ENCODE measurements at regions of chr11 and their contacts with region 1.

Region 1: DNA sequence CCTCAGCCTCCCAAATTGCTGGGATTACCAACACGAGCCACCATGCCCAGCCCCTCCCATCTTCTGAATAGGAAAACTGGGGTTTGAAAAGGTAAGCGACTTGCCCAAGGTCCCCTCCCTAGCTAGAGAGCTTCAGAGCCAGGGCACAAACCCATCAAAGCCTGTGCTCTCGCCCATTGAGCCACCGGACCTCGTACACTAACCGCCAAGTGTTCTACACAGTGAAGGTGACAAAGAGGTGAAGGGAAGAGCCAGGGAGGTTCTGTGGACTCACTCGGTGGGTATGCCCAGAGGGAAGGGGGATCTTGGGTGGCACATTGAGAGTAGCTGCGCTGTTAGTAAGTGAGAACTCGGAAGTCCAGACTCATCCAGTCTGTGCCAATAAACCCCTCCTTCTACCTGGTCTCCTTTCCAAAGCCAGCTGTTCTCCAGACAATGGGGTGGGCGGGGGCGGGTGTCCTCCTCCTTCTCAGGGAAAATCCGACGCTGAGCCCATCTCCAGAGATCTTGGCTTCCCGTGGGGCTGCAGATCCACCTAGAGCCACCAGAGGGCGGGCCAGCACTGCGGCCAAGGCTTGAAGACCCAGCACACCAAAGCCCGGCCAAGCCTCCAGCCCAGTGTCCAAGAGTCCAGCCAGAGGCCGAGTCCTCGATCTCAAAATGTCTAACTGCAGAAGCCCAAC is 3.2 kb upstream of the RTN4RL2 start:
- DNase-seq: peak; percentile 88
- H3K4me3 ChIP-seq: no peak overlapping the region
- H3K27ac ChIP-seq: no peak overlapping the region
- H3K4me1 ChIP-seq: peaks cover 27 to 46% (median 38%) of the 10 kb centered on the region in 4 donors
- H3K27me3 ChIP-seq: peaks cover 48% of the 10 kb centered on the region
- CTCF ChIP-seq: peak; percentile 93 to 100 (median 99)
- EP300 ChIP-seq: no peak
- POLR2A ChIP-seq: no peak

Region 2: DNA sequence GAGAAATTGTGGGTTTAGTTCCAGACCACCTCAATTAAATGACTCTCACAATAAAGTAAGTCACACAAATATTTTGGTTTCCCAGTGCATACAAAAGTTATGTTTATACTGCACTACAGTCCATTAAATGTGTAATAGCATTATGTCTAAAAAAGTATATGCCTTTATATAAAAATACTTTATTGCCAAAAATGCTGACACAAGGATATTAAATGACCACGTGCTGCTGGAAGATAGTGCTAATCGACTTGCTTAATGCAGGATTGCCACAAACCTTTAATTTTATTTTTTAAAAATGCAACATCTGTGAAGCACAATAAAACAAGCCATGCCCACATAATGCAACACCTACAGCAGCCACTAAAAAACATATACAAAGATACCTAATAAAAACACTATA is 441.4 kb before region 1 on chr11:
- in situ Hi-C with region 1: no loop called
- intact Hi-C with region 1: no loop called
- DNase-seq: no peak
- H3K4me3 ChIP-seq: no peak overlapping the region
- H3K27ac ChIP-seq: no peak overlapping the region
- H3K4me1 ChIP-seq: no peaks in the 10 kb centered on the region
- H3K27me3 ChIP-seq: no peaks in the 10 kb centered on the region
- CTCF ChIP-seq: no peak
- EP300 ChIP-seq: no peak
- POLR2A ChIP-seq: no peak

Region 3: GRCh38 chr11:57167125-57167846 is 289.8 kb before region 1 on chr11:
- in situ Hi-C with region 1: no loop called
- intact Hi-C with region 1: no loop called
- DNase-seq: no peak
- H3K4me3 ChIP-seq: no peak overlapping the region
- H3K27ac ChIP-seq: no peak overlapping the region
- H3K4me1 ChIP-seq: no peaks in the 10 kb centered on the region
- H3K27me3 ChIP-seq: no peaks in the 10 kb centered on the region
- CTCF ChIP-seq: no peak
- EP300 ChIP-seq: no peak
- POLR2A ChIP-seq: no peak

Region 4: GRCh38 chr11:57269571-57270021 is 187.5 kb before region 1 on chr11:
- in situ Hi-C with region 1: no loop called
- intact Hi-C with region 1: no loop called
- DNase-seq: no peak
- H3K4me3 ChIP-seq: no peak overlapping the region
- H3K27ac ChIP-seq: no peak overlapping the region
- H3K4me1 ChIP-seq: peaks cover 0 to 8% (median 0%) of the 10 kb centered on the region in 4 donors
- H3K27me3 ChIP-seq: no peaks in the 10 kb centered on the region
- CTCF ChIP-seq: no peak
- EP300 ChIP-seq: no peak
- POLR2A ChIP-seq: no peak

Region 5: DNA sequence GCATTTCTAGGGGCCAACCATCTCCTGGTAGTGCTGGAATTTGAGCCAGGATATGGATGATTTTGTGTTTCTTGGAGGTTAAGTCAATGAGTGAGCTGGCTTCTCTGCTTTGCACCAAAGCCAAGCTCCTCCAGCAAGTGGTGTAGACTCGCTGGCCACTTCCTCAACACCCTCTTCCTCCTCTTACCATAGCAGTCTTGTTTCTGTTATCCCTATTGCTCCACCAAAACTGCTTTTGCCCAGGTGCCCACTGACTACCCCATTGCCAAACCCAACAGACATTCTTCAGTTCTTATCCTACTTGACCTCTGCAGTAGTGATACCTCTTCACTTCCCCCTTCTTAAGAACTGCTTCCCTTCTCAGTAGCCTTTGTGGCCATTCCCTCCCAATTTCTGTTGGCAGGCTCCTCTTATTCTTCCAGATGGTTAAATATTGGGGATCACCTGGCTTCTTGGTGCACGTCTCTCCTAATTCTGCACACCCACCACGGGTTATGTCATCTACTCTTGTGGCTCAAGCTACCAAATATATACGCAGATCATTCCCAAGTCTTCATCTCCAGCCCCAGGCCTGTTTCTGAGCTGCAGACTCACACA is 59.6 kb before region 1 on chr11:
- in situ Hi-C with region 1: no loop called
- intact Hi-C with region 1: no loop called
- DNase-seq: no peak
- H3K4me3 ChIP-seq: no peak overlapping the region
- H3K27ac ChIP-seq: no peak overlapping the region
- H3K4me1 ChIP-seq: peaks cover 0 to 7% (median 1%) of the 10 kb centered on the region in 4 donors
- H3K27me3 ChIP-seq: no peaks in the 10 kb centered on the region
- CTCF ChIP-seq: no peak
- EP300 ChIP-seq: no peak
- POLR2A ChIP-seq: no peak

Region 6: GRCh38 chr11:57527056-57527631 is 70.0 kb after region 1 on chr11:
- in situ Hi-C with region 1: loop called in 1 of 4 experiments (anchors 10 kb)
- intact Hi-C with region 1: loop called (anchors 2 kb)
- DNase-seq: peak; percentile 78
- H3K4me3 ChIP-seq: no peak overlapping the region
- H3K27ac ChIP-seq: no peak overlapping the region
- H3K4me1 ChIP-seq: peaks cover 9 to 20% (median 13%) of the 10 kb centered on the region in 4 donors
- H3K27me3 ChIP-seq: no peaks in the 10 kb centered on the region
- CTCF ChIP-seq: peak; percentile 89 to 92 (median 91)
- EP300 ChIP-seq: no peak
- POLR2A ChIP-seq: no peak

Region 7: DNA sequence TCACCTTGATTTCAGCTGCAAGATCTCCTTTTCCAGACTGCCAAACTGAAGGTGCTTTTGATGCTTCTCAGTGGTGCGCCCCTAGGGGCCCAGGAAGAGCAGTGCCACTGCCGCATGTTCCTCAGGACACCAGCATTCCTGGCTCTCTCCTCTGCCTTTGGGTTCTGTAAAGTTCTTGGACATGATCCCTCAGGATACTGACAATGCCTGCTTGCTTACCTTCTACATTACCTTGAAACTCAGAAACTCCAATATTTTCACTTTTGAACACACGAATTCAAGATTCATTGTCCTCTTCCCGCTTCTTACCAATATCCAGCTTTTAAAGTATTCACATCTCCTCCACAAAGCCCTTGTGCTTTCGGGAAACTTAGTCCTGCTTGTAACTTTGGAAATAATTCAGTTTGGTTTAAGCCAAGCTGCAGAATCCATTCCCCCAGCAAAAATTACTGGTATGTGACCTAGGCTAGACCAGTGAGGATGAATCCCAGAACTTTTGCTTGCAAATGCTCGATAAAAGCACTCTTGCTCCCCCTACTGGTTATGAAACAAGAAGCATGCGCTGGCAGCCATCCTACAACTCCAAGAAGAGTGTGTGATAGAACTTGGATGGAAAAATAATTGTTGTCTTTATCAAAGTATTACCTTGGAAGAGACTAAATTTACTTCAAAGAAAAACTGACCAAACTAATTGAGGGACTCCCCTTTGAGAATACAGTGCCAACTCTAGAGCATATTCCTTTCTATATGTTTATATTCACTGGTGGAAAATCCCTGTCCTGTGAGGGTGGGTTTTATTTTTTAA is 1067.3 kb after region 1 on chr11:
- in situ Hi-C with region 1: loop called in 1 of 4 experiments (anchors 25 kb)
- intact Hi-C with region 1: no loop called
- DNase-seq: peak; percentile 61
- H3K4me3 ChIP-seq: no peak overlapping the region
- H3K27ac ChIP-seq: peak overlapping the region; percentile 3 to 33 (median 8)
- H3K4me1 ChIP-seq: peaks cover 0 to 23% (median 8%) of the 10 kb centered on the region in 4 donors
- H3K27me3 ChIP-seq: no peaks in the 10 kb centered on the region
- CTCF ChIP-seq: peak; percentile 64 to 69 (median 66)
- EP300 ChIP-seq: no peak
- POLR2A ChIP-seq: no peak

Measured in transverse colon (tissue), 4 donors.